ENCODE measurements at regions of chr3 and their contacts with region 1.

Region 1: DNA sequence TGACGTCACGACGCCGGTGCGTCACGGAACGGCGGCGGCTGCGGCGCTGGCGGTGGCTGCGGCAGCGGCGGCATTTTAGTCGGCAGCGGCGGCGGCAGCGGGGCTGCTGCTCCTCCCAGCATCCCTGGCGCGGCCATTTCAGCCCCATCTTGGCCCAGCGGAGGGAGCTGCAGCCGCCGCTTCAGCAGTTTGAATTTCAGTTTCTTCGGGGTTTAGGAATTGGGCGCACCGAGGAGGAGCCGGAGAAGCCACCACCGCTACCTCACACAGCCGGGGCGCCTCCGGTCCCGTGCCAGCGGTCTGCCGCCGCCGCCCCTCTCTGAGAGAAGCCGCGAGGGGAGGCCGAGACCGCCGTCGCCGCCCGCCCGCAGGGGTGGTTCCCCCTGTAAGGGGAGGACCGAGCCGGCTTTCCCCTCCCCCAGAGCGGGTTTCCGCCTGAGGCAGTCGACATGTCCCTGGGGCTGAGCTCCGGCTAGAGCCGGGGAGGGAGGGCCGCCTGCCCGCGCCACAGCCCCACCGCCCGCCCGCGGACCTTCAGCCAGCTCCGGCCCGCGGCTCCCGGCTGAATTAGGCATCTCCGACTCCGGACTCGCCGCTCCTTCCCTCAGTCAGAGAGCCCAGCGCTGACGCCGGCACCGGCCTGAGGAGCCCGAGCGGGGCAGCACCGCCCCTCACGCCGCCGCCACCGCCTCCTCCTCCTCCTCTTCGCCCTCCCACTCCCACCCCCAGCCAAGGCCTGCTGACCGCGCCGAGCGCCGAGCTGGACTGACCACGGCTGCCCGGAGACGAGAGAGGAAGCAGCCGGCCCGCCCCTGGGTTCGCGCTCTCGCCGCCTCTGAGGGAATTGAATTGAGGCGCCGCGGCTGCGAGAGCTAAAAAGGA is at the start of gene TSC22D2:
- DNase-seq: peak; percentile 98
- H3K4me3 ChIP-seq: peak within 1 kb of the TSS; percentile 89 to 92 (median 89)
- H3K27ac ChIP-seq: peak within 1 kb of the TSS; percentile 96 to 100 (median 98)
- H3K4me1 ChIP-seq: peaks cover 0 to 29% (median 13%) of the 10 kb centered on the region in 4 donors
- H3K27me3 ChIP-seq: no peaks in the 10 kb centered on the region
- CTCF ChIP-seq: peak in 1 of 4 experiments; percentile 25
- EP300 ChIP-seq: peak in 2 of 4 donors; percentile 16 to 35
- POLR2A ChIP-seq: peak; percentile 96 to 97
- total RNA-seq, gene TSC22D2: 14.6 to 24.9 (median 17.8) TPM

Region 2: DNA sequence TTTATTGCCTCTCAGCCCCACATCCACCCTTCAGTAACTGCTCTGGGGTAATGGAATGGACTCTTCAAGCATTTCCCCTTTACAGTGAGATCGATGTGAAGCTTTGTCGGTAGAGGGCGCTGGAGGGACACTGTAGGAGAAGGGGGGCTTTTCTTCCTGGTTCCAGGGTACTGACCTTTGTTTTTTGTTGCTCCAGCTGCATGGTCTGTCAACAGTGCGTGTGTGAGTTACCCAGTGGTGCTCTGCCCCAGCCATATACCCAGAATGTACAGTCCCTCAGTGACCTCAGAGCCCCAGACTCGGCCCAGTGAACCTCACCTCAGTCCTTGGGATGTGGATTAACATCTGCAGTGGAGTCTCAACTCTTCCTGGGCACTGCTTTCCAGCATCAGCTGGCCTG is 180.6 kb before region 1 on chr3:
- intact Hi-C with region 1: loop called (anchors 5 kb)
- DNase-seq: no peak
- H3K4me3 ChIP-seq: no peak overlapping the region
- H3K27ac ChIP-seq: no peak overlapping the region
- H3K4me1 ChIP-seq: peaks cover 0 to 6% (median under 1%) of the 10 kb centered on the region in 4 donors
- H3K27me3 ChIP-seq: no peaks in the 10 kb centered on the region
- CTCF ChIP-seq: peak; percentile 45 to 63 (median 46)
- EP300 ChIP-seq: no peak
- POLR2A ChIP-seq: no peak

Region 3: GRCh38 chr3:150255413-150255812 is 153.0 kb before region 1 on chr3:
- intact Hi-C with region 1: no loop called
- DNase-seq: peak; percentile 86
- H3K4me3 ChIP-seq: no peak overlapping the region
- H3K27ac ChIP-seq: peak overlapping the region; percentile 12 to 75 (median 66)
- H3K4me1 ChIP-seq: peaks cover 0 to 29% (median 12%) of the 10 kb centered on the region in 4 donors
- H3K27me3 ChIP-seq: no peaks in the 10 kb centered on the region
- CTCF ChIP-seq: no peak
- EP300 ChIP-seq: no peak
- POLR2A ChIP-seq: no peak

Region 4: GRCh38 chr3:150348500-150348899 is 60.0 kb before region 1 on chr3:
- intact Hi-C with region 1: loop called (anchors 5 kb)
- DNase-seq: peak; percentile 71
- H3K4me3 ChIP-seq: no peak overlapping the region
- H3K27ac ChIP-seq: peak overlapping the region in 3 of 4 donors; percentile 24 to 64 (median 48)
- H3K4me1 ChIP-seq: peaks cover 0 to 40% (median 32%) of the 10 kb centered on the region in 4 donors
- H3K27me3 ChIP-seq: no peaks in the 10 kb centered on the region
- CTCF ChIP-seq: no peak
- EP300 ChIP-seq: no peak
- POLR2A ChIP-seq: no peak

Region 5: GRCh38 chr3:150451329-150452048 is 43.0 kb after region 1 on chr3:
- intact Hi-C with region 1: loop called (anchors 5 kb)
- DNase-seq: no peak
- H3K4me3 ChIP-seq: no peak overlapping the region
- H3K27ac ChIP-seq: peak overlapping the region in 2 of 4 donors; percentile 24 to 27
- H3K4me1 ChIP-seq: peaks cover 0 to 76% (median 55%) of the 10 kb centered on the region in 4 donors
- H3K27me3 ChIP-seq: no peaks in the 10 kb centered on the region
- CTCF ChIP-seq: no peak
- EP300 ChIP-seq: no peak
- POLR2A ChIP-seq: no peak

Region 6: DNA sequence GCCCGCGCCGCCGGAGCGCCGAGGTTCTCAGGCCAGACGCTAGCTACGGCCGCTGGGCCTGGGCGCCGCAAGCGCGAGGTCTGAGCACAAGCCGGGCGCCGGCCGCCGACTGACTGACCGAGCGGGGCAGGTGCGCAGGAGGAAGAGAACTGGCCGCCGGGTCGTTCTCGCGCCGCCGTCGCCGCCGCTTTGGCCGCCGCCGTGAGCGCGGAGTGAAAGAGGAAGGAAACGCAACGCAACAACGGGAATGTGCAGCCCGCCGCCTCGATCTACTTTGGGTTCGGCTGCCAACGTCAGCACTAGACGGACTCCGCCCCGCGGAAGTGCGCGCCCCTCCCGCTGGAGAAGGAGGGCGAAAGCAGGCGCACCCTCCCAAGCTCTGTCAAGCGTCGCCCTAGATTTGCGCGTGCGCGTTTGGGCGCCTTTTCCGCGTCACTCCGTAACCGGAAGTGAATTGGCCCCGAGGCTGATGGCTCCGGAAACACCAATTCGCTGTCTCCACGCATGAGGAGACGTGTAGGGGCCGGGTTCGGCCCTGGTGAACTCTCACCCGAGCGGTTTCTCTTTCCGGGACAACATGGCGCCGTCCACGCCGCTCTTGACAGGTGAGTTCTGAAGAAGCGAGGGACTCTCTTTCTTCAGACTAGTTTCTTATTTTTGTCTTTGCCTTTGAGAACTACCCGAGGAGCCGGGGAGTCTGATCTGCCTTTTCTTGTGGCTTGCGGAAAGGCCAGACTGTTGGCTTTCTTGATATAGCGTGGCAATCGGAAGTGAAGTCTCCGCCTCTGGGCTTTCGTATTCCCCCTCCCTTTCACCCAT is 138.0 kb after region 1 on chr3 and contains the starts of genes EIF2A and SERP1:
- intact Hi-C with region 1: loop called (anchors 2 kb)
- DNase-seq: peak; percentile 99
- H3K4me3 ChIP-seq: peak within 1 kb of the TSS; percentile 67 to 84 (median 74)
- H3K27ac ChIP-seq: peak within 1 kb of the TSS; percentile 96 to 99 (median 98)
- H3K4me1 ChIP-seq: peaks cover 0 to 44% (median 32%) of the 10 kb centered on the region in 4 donors
- H3K27me3 ChIP-seq: no peaks in the 10 kb centered on the region
- CTCF ChIP-seq: no peak
- EP300 ChIP-seq: peak in 1 of 4 donors; percentile 88
- POLR2A ChIP-seq: peak; percentile 95 to 96
- total RNA-seq, gene EIF2A: 147 to 228 (median 160) TPM
- total RNA-seq, gene SERP1: 140 to 197 (median 185) TPM

Measured in sigmoid colon (tissue), 7 donors.